HepG2 (cell line): ENCODE measurements at regions of chr5 and their contacts with region 1.

Region 1: DNA sequence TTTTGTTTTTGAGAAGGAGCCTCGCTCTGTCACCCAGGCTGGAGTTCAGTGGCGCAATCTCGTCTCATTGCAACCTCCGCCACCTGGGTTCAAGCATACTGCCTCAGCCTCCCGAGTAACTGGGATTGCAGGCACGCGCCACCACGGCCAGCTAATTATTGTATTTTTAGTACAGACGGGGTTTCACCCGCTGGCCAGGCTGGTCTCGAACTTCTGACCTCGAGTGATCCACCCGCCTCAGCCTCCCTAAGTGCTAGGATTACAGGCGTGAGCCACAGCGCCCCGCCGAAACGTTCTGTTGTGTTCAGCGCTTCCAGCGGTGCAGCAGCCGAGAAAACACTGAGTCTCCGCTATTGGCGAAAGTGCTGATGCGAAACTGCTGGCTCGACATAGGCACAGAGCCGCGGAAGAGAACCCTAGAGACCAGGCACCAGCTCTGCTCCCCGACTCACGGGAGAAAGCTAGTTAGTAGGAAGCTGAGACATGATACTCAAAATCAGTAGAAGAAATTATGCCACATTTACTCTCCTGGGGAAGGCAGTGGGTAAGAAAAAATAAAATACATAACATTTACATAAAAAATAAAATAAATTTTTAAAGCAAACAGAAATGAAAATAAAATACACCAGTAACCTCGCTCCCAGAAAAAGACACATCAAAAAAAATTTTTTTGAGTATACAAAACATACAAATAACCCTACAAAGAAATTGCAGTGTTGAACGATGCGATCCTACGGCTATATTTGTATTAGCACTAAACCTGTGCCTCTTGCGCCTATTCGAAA is 31.6 kb downstream of the ANXA2R start:
- DNase-seq: peak; percentile 89
- ATAC-seq: peak; percentile 71
- H3K4me3 ChIP-seq: peak overlapping the region; percentile 73 to 94 (median 78)
- H3K27ac ChIP-seq: peak overlapping the region; percentile 84
- H3K4me1 ChIP-seq: peaks cover 12% of the 10 kb centered on the region
- H3K27me3 ChIP-seq: no peaks in the 10 kb centered on the region; a peak in 1 of 5 replicates
- CTCF ChIP-seq: peak; percentile 76
- EP300 ChIP-seq: peak in 1 of 2 experiments; percentile 53; a peak in 1 of 4 replicates
- POLR2A ChIP-seq: peak; percentile 45 to 60; a peak in 3 of 4 replicates
- RAD21 ChIP-seq: peak; percentile 14; the same call in 1 of the 2 replicates

Region 2: GRCh38 chr5:42666869-42667268 is 341.7 kb before region 1 on chr5:
- CTCF ChIA-PET with region 1: no interaction called
- POLR2A ChIA-PET with region 1: no interaction called
- in situ Hi-C with region 1: no loop called
- intact Hi-C with region 1: no loop called
- DNase-seq: no peak
- ATAC-seq: no peak
- H3K4me3 ChIP-seq: no peak overlapping the region
- H3K27ac ChIP-seq: no peak overlapping the region
- H3K4me1 ChIP-seq: no peaks in the 10 kb centered on the region
- H3K27me3 ChIP-seq: no peaks in the 10 kb centered on the region
- CTCF ChIP-seq: no peak
- EP300 ChIP-seq: no peak
- POLR2A ChIP-seq: no peak
- RAD21 ChIP-seq: no peak

Region 3: DNA sequence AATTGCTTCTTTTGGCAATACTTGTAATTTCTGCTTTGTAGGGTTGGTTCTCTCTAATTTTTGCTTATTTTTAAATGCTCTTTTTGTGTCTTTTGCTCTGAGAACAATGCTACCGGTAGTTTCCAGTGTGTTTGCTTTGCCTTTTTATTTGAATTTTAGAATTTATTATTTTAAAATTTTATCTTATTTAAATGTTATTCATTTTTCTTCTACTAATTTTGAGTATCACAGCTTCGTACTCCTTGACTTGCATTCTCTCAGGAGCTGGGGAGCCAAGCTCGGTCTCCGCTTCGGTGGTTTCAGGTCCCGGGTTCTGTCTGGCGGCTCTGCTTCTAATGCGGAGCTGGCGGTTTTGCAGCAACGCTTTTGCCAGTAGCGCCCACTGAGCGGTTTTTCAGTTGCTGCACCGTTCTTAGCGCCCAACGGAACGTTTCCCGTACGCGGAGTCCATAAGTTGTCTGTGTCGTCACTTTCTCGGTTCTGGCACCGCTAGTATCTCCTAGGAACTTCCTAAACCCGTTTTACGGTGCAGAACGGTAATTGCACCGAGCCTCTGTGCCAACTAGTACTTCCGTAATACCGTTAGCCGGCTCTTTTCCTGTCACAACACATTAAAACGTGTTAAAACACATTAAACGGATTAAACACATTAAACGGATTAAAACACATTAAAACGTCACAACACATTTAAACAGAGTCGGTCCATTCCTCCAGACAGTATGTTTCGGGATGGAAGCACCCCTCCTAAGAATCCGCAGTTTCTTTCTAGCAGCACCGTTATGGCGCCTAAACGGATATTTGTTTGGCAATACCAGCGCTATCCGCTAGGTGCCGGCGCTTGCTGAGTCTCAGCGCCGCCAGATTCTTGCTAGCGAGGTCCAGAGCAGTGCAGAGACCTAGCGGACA is 14.1 kb before region 1 on chr5:
- CTCF ChIA-PET with region 1: interaction called, 7 read pairs
- POLR2A ChIA-PET with region 1: interaction called, 43 read pairs
- in situ Hi-C with region 1: no loop called
- intact Hi-C with region 1: loop called (anchors 2 kb)
- DNase-seq: peak; percentile 81
- ATAC-seq: peak; percentile 86
- H3K4me3 ChIP-seq: peak overlapping the region; percentile 75 to 93 (median 77)
- H3K27ac ChIP-seq: peak overlapping the region; percentile 64
- H3K4me1 ChIP-seq: peaks cover 25% of the 10 kb centered on the region
- H3K27me3 ChIP-seq: no peaks in the 10 kb centered on the region
- CTCF ChIP-seq: peak; percentile 87
- EP300 ChIP-seq: no peak
- POLR2A ChIP-seq: peak in 1 of 2 experiments; percentile 43; a peak in 1 of 4 replicates
- RAD21 ChIP-seq: 0 out of 2 replicates have a peak, but pooled peaks have one; percentile 40

Region 4: GRCh38 chr5:43033841-43034590 is 25.5 kb after region 1 on chr5:
- CTCF ChIA-PET with region 1: no interaction called
- POLR2A ChIA-PET with region 1: no interaction called
- in situ Hi-C with region 1: no loop called
- intact Hi-C with region 1: no loop called
- DNase-seq: no peak
- ATAC-seq: peak; percentile 31; the same call in 2 of the 3 replicates
- H3K4me3 ChIP-seq: no peak overlapping the region
- H3K27ac ChIP-seq: no peak overlapping the region
- H3K4me1 ChIP-seq: peaks cover 13% of the 10 kb centered on the region
- H3K27me3 ChIP-seq: no peaks in the 10 kb centered on the region
- CTCF ChIP-seq: no peak
- EP300 ChIP-seq: no peak
- POLR2A ChIP-seq: no peak
- RAD21 ChIP-seq: no peak

Region 5: DNA sequence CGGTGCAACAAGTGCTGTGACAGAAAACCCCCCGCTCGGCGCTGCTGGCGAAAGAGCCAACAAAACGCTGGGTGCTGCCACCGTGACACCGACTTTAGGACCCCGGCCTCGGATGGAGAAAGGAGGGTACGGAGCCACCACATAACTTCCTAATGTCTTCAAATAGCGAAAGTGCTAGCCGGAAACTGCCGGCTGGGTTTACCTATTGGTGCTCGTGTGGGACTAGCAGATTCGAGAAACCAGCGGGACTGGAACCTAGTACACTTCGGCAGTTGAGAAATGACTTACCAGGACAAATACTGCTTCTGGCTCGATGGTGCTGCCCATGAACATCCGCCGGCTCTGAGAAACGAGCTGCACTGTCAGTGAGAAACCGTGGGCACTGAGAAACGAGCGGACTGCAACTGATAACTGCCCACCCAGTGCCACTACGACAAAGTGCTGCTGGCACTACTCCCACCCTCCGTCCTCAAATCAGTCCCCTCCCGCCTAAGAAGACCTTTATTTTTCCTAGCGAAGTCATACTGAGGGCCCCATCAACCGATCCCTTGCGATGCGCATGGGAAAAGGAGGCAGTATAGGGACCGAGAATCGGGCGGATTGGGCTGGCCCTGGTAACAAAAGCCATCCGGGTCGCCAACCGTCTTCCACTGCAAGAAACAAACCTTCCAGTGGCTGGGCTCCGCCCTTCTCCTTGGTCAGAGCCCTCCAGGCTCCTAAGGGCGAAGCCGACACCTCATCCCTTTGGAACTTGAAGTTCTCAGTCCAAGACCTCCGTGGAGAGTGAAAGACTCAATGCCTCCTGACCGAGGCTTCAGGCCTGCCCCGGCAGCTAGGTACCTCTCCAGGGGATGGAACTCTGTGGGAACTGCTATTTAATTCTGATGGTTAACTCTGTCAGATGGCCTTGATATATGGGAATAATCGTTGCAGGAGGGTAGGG is 58.5 kb after region 1 on chr5:
- CTCF ChIA-PET with region 1: interaction called, 16 read pairs
- POLR2A ChIA-PET with region 1: interaction called, 40 read pairs
- in situ Hi-C with region 1: loop called (anchors 5 kb)
- intact Hi-C with region 1: loop called (anchors 1 kb)
- DNase-seq: peak; percentile 87
- ATAC-seq: peak; percentile 83
- H3K4me3 ChIP-seq: peak overlapping the region; percentile 82 to 92 (median 83)
- H3K27ac ChIP-seq: peak overlapping the region; percentile 98
- H3K4me1 ChIP-seq: peaks cover 35% of the 10 kb centered on the region
- H3K27me3 ChIP-seq: no peaks in the 10 kb centered on the region; a peak in 1 of 5 replicates
- CTCF ChIP-seq: peak; percentile 21; the same call in 1 of the 2 replicates
- EP300 ChIP-seq: peak; percentile 38 to 84; a peak in 3 of 4 replicates
- POLR2A ChIP-seq: peak; percentile 15 to 35; a peak in 3 of 4 replicates
- RAD21 ChIP-seq: no peak

Region 6: DNA sequence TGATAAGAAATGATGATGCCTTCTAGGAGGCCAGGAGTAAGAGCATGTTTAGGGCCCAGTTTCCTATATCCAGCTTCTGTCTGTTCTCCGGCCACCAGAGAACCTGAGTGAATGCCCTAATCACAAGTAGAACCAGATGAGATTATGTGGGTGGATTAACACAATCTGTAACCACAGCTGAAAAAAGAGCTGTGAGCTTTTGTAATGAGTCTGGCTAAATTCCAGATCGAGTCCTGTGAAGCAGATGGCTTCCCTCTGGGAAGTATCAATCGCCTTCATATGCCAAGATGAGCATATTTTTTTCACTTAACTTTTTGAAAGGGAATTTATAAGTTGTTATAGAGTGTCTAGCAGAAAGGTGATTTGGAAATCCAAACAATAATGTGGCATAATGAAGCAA is 694.3 kb after region 1 on chr5:
- CTCF ChIA-PET with region 1: no interaction called
- POLR2A ChIA-PET with region 1: no interaction called
- in situ Hi-C with region 1: no loop called
- intact Hi-C with region 1: no loop called
- DNase-seq: no peak
- ATAC-seq: no peak
- H3K4me3 ChIP-seq: no peak overlapping the region
- H3K27ac ChIP-seq: no peak overlapping the region
- H3K4me1 ChIP-seq: no peaks in the 10 kb centered on the region
- H3K27me3 ChIP-seq: no peaks in the 10 kb centered on the region
- CTCF ChIP-seq: no peak
- EP300 ChIP-seq: no peak
- POLR2A ChIP-seq: no peak
- RAD21 ChIP-seq: no peak